GM13976 (cell line): ENCODE measurements at regions of chr15 and their contacts with region 1.

Region 1: GRCh38 chr15:56432304-56432703 is 32.6 kb downstream of the MNS1 start:
- DNase-seq: no peak
- CTCF ChIP-seq: no peak

Region 2: GRCh38 chr15:56252386-56252785 is 179.9 kb before region 1 on chr15:
- in situ Hi-C with region 1: loop called (anchors 10 kb)
- DNase-seq: no peak
- CTCF ChIP-seq: no peak